Activated B cell treated with CpG ODN at 0.5 μM for 24 hours (primary cell): ENCODE measurements at regions of chr11 and their contacts with region 1.

Region 1: DNA sequence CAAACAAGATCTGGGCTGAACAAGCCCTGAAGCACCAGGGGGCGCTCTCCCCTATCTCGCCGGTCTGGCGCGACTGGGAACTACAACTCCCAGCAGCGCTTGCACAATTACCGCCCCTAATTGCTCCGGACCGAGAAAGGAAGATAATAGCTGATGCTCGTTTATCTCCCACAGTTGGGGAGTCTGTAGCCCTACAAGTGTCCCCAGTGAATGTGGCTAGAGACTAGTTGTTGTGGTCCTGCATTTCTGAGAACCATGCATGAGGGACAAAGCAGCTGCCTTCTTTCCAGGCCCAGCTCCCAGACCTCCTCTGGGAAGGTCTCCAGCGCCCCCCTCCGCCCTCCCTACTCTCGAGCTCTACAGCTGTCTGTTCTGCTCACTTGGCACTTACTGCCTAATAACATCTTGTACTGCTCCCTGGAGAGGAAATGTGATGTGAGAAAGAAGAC is 34.4 kb downstream of the NRXN2 start:
- DNase-seq: peak; percentile 91
- ATAC-seq: peak; percentile 95
- H3K4me3 Mint-ChIP-seq: peak overlapping the region; percentile 82
- H3K27ac Mint-ChIP-seq: peak overlapping the region; percentile 82
- H3K4me1 Mint-ChIP-seq: peaks cover 21% of the 10 kb centered on the region
- H3K27me3 Mint-ChIP-seq: peaks cover 15% of the 10 kb centered on the region
- CTCF ChIP-seq: peak; percentile 85

Region 2: GRCh38 chr11:64553551-64554201 is 134.9 kb before region 1 on chr11:
- CTCF ChIA-PET with region 1: no interaction called
- POLR2A ChIA-PET with region 1: no interaction called
- intact Hi-C with region 1: loop called (anchors 1 kb)
- DNase-seq: peak; percentile 62
- ATAC-seq: peak; percentile 68
- H3K4me3 Mint-ChIP-seq: no peak overlapping the region
- H3K27ac Mint-ChIP-seq: no peak overlapping the region
- H3K4me1 Mint-ChIP-seq: peaks cover 15% of the 10 kb centered on the region
- H3K27me3 Mint-ChIP-seq: peaks cover 4% of the 10 kb centered on the region
- CTCF ChIP-seq: peak; percentile 40

Region 3: DNA sequence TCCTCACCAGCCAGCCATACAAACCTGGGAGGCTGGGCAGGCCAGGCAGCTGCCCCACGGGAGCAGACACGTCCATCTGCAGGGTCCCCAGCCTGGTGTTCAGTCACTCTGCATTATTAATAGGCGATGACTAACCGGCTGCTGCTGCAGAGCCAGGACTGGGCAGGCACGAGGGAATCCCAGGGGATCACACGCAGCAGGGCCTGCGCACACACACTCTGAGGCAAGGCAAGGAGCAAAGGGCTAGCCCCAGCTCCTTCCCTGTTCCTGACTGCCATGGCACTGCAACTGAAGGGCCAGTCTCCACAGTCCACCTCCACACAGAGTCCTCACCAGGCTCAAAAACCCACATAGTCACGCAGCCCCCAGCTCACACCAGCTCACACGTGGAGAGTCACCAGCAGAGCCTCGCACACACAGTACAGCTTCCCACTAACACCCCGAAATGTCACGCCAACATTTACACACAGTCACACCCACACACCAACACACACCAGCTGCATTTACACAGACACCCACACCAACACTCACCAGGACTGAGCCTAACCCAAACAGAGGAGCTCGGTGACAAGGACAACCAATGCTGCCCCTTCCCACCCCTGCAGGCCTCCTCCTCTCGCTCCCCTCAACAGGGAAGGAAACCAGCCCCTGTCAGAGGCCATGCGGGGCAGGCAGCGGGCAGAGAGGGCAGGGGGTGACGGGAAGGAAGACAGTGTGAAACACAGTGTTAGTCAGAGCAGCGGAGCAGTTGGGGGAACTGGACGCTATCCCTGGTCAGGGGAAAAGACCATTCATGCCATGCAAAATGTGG is 12.9 kb before region 1 on chr11:
- CTCF ChIA-PET with region 1: interaction called, 6 read pairs
- POLR2A ChIA-PET with region 1: interaction called, 10 read pairs
- intact Hi-C with region 1: no loop called
- DNase-seq: peak; percentile 26
- ATAC-seq: peak; percentile 82
- H3K4me3 Mint-ChIP-seq: peak overlapping the region; percentile 32
- H3K27ac Mint-ChIP-seq: no peak overlapping the region
- H3K4me1 Mint-ChIP-seq: peaks cover 34% of the 10 kb centered on the region
- H3K27me3 Mint-ChIP-seq: peaks cover 45% of the 10 kb centered on the region
- CTCF ChIP-seq: no peak

Region 4: DNA sequence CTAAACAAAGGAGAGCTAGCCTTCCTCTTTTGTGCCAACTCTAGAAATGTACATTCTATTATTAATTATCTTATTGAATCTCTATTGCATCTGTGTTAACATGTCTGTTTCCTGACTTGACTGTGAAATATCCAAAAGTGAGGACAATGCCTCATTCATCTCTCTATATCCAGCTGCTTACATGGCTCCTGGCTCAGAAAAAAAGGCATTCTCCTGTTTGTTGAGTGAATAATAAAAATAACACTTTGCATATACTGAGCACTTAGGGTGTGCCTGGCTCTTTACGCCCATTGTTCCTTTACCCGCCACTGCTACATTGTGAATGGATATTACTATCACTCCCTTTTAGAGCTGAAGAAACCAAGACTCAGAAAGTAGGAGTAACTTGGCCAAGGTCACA is 14.5 kb after region 1 on chr11:
- CTCF ChIA-PET with region 1: interaction called, 25 read pairs
- POLR2A ChIA-PET with region 1: interaction called, 5 read pairs
- intact Hi-C with region 1: loop called (anchors 2 kb)
- DNase-seq: no peak
- ATAC-seq: no peak
- H3K4me3 Mint-ChIP-seq: no peak overlapping the region
- H3K27ac Mint-ChIP-seq: no peak overlapping the region
- H3K4me1 Mint-ChIP-seq: peaks cover 1% of the 10 kb centered on the region
- H3K27me3 Mint-ChIP-seq: peaks cover 26% of the 10 kb centered on the region
- CTCF ChIP-seq: no peak

Region 5: DNA sequence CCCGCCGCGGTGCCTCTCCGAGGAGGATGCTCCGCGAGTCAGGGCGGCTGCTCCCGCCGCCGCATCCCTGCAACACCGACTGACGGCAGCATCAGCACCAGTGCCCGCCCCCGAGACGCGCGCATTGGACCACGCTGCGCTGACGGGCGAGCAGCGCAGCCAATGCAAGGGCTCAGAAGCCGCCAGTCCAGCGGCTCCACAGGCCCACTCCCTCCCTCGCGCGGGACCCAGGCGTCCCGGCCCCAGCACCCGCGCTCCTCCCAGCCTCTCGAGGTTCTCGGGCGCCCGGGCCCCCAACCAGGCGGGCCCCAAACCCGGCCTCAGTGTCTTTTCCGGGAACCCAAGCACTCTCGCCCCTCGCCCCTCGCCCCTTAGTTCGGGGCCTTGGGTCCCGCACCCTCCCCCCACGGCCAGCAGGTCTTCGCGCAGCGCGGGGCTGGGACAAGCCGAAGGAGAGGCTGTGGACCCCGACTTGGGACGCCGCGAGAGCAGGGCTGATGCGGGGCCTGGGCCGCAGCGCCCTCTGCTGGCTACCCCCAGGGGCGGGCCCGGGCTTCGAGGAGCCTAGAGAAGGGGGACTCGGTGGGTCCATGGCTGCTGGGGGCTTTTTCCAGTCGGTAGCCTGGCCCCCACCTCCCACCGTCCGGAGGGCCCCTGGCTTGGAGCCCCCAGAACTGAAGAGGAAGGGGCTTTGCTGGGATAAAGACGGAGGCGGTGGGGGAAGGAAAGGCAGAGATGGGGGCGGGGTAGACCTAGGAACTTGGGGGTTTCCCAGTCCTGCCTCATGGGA is 34.8 kb after region 1 on chr11 and contains the start of gene NRXN2:
- CTCF ChIA-PET with region 1: interaction called, 8 read pairs
- POLR2A ChIA-PET with region 1: interaction called, 4 read pairs
- intact Hi-C with region 1: loop called (anchors 1 kb)
- DNase-seq: peak; percentile 88
- ATAC-seq: peak; percentile 89
- H3K4me3 Mint-ChIP-seq: peak within 1 kb of the TSS; percentile 81
- H3K27ac Mint-ChIP-seq: peak within 1 kb of the TSS; percentile 76
- H3K4me1 Mint-ChIP-seq: peaks cover 22% of the 10 kb centered on the region
- H3K27me3 Mint-ChIP-seq: peaks cover 30% of the 10 kb centered on the region
- CTCF ChIP-seq: peak; percentile 64
- total RNA-seq, gene NRXN2: 0.54 and 0.73 TPM in 2 replicates

Region 6: GRCh38 chr11:64767344-64768299 is 79.1 kb after region 1 on chr11:
- CTCF ChIA-PET with region 1: interaction called, 3 read pairs
- POLR2A ChIA-PET with region 1: interaction called, 8 read pairs
- intact Hi-C with region 1: loop called (anchors 1 kb)
- DNase-seq: peak; percentile 60
- ATAC-seq: no peak
- H3K4me3 Mint-ChIP-seq: peak overlapping the region; percentile 11
- H3K27ac Mint-ChIP-seq: peak overlapping the region; percentile 85
- H3K4me1 Mint-ChIP-seq: peaks cover 91% of the 10 kb centered on the region
- H3K27me3 Mint-ChIP-seq: no peaks in the 10 kb centered on the region
- CTCF ChIP-seq: peak; percentile 82